ENCODE measurements at regions of chr22 and their contacts with region 1.

Region 1: DNA sequence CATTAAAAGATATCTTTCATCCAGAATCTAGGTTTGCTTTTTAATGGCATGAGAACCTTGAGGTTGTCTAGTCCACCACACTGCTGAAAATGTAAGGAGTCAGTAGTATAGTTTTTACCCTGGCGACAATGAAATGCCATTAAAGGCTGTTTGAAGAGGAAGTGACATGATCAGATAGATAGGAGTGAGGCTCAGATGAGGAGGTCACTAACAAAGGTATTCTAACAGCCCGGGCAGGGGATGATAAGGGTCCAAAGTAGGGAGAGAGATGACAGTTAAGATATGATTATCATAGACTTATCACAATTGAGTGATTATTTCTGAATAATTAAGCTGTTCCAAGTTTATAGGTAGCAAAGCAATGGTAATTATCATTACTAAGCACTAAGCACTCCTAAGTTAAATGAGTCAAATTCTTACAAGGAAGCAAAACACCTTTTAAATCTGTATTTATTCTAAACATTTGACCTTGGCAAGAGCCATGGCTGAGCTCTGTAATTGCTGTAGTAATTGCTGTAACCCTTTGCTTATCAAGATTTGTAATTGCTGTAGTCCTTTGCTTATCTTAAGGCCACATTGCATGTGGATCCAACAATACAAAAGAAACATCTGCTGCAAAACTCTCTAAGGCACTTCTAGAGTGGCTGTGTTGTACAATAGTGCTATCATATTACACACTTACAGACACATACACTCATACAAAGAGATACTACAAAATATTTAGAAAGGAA is 92.6 kb downstream of the ENTHD1 start:
- DNase-seq: no peak
- H3K4me3 ChIP-seq: no peak overlapping the region
- H3K27ac ChIP-seq: no peak overlapping the region
- H3K4me1 ChIP-seq: peaks cover 8% of the 10 kb centered on the region
- H3K27me3 ChIP-seq: no peaks in the 10 kb centered on the region
- CTCF ChIP-seq: no peak

Region 2: DNA sequence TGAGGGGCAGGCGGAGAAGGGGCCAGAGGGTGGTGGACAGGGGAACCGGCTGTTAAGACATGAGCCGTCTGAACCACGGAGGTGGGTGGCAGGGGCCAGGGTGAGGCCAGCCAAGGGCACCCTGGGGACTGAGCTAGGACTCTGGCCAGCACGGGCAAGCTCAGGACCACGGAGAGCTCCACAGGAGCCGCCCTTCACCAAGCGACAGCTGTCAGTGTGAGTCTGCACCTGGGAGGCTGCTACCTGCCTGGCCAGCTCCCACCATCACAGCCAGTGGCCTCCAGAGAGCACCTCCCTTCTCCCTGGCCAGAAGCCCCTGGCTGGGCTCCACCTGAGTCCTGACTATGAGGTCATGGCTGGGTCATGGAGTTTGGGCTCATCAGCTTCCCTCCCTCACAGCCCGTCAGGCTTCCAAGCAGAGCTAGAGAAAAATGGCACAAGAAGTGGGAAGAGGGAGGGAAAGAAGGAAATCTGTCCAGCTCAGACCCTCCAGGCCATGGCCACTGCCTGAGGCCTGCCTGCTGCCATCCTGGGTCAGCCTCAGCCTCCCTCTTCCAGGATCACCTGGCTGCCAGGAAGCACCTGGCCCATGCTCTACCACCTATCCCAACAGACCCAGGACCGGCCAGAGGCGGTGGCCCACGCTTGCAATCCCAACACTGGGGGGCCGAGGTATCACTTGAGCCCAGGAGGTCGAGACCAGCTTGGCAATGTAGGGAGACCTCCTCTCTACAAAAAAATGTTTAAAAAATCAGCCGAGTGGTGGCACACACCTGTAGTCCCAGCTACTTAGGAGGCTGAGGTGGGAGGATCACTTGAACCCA is 322.3 kb before region 1 on chr22:
- CTCF ChIA-PET with region 1: no interaction called
- dilution Hi-C with region 1: no loop called
- in situ Hi-C with region 1: no loop called
- intact Hi-C with region 1: no loop called
- DNase-seq: peak; percentile 34
- H3K4me3 ChIP-seq: no peak overlapping the region
- H3K27ac ChIP-seq: no peak overlapping the region
- H3K4me1 ChIP-seq: no peaks in the 10 kb centered on the region
- H3K27me3 ChIP-seq: no peaks in the 10 kb centered on the region
- CTCF ChIP-seq: no peak

Region 3: DNA sequence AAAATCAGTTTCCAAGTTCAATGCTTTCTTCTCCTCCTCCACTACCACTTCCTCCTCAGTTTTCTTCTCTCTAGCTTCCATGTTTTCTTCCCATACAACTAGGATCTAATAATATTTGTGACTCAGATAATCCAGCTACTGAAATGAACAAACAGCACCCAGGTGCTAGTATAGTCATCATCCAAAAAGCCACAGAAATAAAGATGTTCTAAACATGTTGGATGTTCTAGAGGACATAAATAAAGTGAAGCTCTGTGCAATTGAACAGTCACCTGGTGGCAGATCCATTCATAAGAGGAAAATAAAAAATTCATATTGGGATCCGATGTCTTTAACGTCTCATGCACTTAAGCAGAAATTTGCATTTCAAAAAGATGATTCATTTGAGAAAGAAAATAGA is 50.2 kb before region 1 on chr22:
- CTCF ChIA-PET with region 1: no interaction called
- dilution Hi-C with region 1: loop called (anchors 5 kb)
- in situ Hi-C with region 1: no loop called
- intact Hi-C with region 1: no loop called
- DNase-seq: no peak
- H3K4me3 ChIP-seq: no peak overlapping the region
- H3K27ac ChIP-seq: no peak overlapping the region
- H3K4me1 ChIP-seq: no peaks in the 10 kb centered on the region
- H3K27me3 ChIP-seq: peaks cover 11% of the 10 kb centered on the region
- CTCF ChIP-seq: no peak

Region 4: DNA sequence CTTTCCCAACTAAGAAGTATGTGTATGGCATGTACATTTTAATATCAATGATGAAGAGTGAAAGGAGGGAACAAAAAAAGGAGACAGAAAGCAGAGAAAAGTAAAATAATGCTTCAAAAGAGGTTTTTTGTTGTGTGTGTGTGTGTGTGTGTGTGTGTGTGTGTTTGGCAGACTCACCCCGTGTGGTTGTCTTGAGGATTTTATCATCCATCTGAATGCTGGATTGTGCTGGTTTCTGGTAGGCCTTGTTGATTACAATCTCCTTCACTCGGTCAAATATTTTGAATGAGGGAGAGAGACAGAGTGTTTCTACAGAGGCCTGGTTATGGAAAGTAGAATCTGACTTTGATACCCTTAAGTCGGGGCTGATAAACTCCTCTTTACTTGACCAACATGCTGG is 35.9 kb before region 1 on chr22:
- CTCF ChIA-PET with region 1: no interaction called
- dilution Hi-C with region 1: no loop called
- in situ Hi-C with region 1: no loop called
- intact Hi-C with region 1: no loop called
- DNase-seq: no peak
- H3K4me3 ChIP-seq: no peak overlapping the region
- H3K27ac ChIP-seq: no peak overlapping the region
- H3K4me1 ChIP-seq: no peaks in the 10 kb centered on the region
- H3K27me3 ChIP-seq: peaks cover 2% of the 10 kb centered on the region
- CTCF ChIP-seq: no peak

Region 5: DNA sequence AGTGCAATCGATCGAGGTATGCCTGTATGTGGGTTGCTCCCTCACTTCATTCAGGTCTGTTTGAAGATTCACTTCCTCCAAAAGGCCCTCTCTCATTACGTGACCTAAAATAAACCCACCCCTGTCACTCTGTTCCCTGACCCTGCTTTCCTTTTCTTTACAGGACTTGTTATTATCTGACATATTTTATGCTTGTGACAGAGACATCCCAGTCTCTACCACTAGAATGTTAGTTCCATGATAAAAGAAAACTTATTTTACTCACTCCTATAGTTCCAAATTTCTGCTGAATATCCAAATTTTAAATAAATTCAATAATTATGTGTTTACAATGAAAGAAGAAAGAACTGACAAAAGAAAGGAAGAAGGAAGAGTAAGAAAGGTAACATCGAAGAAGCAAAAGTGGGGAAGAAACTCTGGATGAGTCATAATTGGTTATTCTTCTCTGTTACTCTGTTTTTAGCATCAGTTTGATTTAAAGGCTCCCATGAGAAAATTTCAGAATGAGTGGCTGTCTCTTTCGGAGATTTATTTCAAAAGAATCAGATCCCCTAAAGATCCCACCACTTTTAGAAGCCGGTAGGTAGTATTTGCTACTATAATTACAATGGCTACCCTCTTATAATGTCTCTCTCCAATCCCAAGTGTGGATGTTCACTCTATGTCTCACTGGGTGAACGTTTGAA is 59.1 kb after region 1 on chr22:
- CTCF ChIA-PET with region 1: no interaction called
- dilution Hi-C with region 1: loop called (anchors 5 kb)
- in situ Hi-C with region 1: no loop called
- intact Hi-C with region 1: no loop called
- DNase-seq: no peak
- H3K4me3 ChIP-seq: no peak overlapping the region
- H3K27ac ChIP-seq: no peak overlapping the region
- H3K4me1 ChIP-seq: no peaks in the 10 kb centered on the region
- H3K27me3 ChIP-seq: peaks cover 5% of the 10 kb centered on the region
- CTCF ChIP-seq: no peak